ENCODE measurements at regions of chr13 and their contacts with region 1.

Region 1: DNA sequence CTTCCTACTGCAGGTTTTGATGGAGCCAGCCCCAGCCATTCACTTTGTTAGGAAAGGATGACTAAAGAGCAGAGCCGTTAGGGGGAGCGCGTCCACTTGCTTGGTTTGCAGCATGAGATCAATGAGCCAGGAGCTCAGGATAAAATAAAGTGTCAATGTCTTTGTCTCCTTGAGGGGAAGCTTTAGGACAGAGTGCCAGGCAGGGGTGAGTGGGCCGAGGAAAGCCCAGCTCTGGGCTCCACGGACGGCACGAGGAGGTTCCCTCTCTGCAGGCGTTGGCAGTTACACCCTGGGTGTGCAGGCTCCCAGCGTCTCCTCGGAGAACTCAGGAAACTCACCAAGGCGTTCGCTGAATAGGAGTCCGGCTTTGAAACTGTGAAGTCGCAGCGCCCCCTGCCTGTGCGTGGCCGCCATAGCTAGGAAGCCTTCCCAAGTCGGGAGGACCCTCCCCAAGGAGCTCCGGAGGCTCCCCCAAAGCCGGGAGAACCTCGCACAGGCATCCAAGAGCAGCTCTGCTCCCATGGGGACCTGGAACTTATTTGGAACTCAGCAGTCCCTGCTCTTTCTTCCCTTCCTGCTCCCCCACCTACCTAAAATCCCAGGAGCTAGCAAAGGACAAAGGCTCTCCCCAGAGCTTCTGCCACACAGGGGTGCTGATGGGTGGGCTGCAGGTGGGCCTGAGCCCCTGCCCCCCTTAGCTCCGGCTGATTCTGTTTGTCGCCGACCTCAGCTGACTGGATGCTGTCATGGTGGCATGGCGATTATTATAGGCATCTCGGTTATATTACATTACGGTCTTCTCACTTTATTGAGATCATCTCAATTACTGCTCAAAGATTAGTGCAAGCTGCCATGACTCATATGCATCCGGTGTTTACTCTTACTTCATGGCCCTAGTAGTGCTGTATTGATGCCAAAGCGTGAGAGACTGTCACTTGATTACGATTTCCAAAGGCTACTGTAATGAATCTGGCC is 34.4 kb downstream of the GSX1 start:
- DNase-seq: peak; percentile 12
- ATAC-seq: peak; percentile 83
- H3K4me3 ChIP-seq: no peak overlapping the region
- H3K27ac ChIP-seq: no peak overlapping the region
- H3K4me1 ChIP-seq: no peaks in the 10 kb centered on the region
- H3K27me3 ChIP-seq: peaks cover 2 to 6% of the 10 kb centered on the region in 2 experiments
- CTCF ChIP-seq: peak; percentile 87 to 96 (median 94)
- EP300 ChIP-seq: no peak
- POLR2A ChIP-seq: no peak
- RAD21 ChIP-seq: peak; percentile 87

Region 2: DNA sequence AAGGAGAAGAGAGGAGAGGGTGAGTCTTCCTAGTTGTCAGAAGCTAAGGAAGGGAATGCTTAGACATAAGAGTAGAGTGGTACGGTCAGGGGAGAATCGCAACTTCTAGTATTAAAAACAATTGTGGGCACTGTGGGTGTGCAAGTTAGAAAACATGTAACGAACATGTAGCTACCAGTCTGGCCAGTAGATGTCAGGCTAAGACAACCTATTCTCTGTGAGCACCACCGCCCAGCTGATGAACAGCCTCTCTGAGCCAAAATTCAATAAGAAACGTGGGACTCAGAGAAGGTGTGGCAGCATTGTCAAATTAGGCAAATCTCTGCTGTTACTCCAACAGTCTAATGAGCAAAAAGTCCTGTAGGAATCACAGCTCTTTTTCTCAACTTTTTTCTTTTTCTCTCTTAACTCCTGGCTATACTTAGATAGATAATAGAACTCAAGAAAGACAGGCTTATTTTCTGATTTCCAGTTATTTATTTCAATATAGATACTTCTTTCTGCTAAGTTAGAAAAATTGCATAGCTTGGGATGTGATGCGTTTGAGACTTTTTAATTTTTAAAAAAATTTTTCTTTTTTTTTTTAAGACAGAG is 841.3 kb before region 1 on chr13:
- CTCF ChIA-PET with region 1: interaction called, 18 read pairs
- POLR2A ChIA-PET with region 1: no interaction called
- RAD21 ChIA-PET with region 1: interaction called, 12 read pairs
- SMC1A ChIA-PET with region 1: interaction called, 13 read pairs
- in situ Hi-C with region 1: loop called (anchors 5 kb)
- intact Hi-C with region 1: loop called (anchors 5 kb)
- DNase-seq: peak; percentile 49
- ATAC-seq: peak; percentile 91
- H3K4me3 ChIP-seq: no peak overlapping the region
- H3K27ac ChIP-seq: no peak overlapping the region
- H3K4me1 ChIP-seq: no peaks in the 10 kb centered on the region
- H3K27me3 ChIP-seq: no peaks in the 10 kb centered on the region
- CTCF ChIP-seq: peak; percentile 64 to 93 (median 68); a peak in 4 of 6 replicates
- EP300 ChIP-seq: no peak
- POLR2A ChIP-seq: no peak
- RAD21 ChIP-seq: peak; percentile 93

Region 3: GRCh38 chr13:27379694-27380641 is 446.7 kb before region 1 on chr13:
- CTCF ChIA-PET with region 1: interaction called, 189 read pairs
- POLR2A ChIA-PET with region 1: no interaction called
- RAD21 ChIA-PET with region 1: interaction called, 10 read pairs
- SMC1A ChIA-PET with region 1: interaction called, 35 read pairs
- in situ Hi-C with region 1: loop called (anchors 5 kb)
- intact Hi-C with region 1: no loop called
- DNase-seq: no peak
- ATAC-seq: peak; percentile 52
- H3K4me3 ChIP-seq: no peak overlapping the region
- H3K27ac ChIP-seq: no peak overlapping the region
- H3K4me1 ChIP-seq: no peaks in the 10 kb centered on the region
- H3K27me3 ChIP-seq: peaks cover 0 to 1% of the 10 kb centered on the region in 2 experiments; a peak in 1 of 4 replicates
- CTCF ChIP-seq: peak; percentile 55 to 63 (median 58)
- EP300 ChIP-seq: no peak
- POLR2A ChIP-seq: no peak
- RAD21 ChIP-seq: peak; percentile 61

Region 4: DNA sequence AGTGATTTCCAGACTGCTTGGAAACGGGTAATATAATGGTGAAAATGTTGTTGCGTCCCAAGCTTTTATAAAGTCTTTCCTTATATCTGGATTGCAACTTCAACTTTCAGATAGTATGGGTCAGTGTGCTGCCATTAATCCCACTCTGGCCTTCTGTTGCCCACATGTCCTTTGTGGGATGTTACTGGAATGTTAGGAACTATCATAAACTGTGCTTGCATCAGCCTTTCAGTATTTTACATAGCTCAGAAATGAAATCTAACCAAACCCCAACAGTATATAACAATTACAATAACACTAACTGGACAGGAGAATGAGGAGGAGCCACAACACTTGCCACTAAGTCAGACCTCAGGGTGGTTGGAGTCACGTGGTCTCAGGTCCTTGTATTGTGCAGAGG is 285.3 kb before region 1 on chr13:
- CTCF ChIA-PET with region 1: interaction called, 18 read pairs
- POLR2A ChIA-PET with region 1: no interaction called
- RAD21 ChIA-PET with region 1: no interaction called
- SMC1A ChIA-PET with region 1: interaction called, 3 read pairs
- in situ Hi-C with region 1: no loop called
- intact Hi-C with region 1: no loop called
- DNase-seq: no peak
- ATAC-seq: no peak
- H3K4me3 ChIP-seq: no peak overlapping the region
- H3K27ac ChIP-seq: no peak overlapping the region
- H3K4me1 ChIP-seq: no peaks in the 10 kb centered on the region
- H3K27me3 ChIP-seq: no peaks in the 10 kb centered on the region
- CTCF ChIP-seq: no peak
- EP300 ChIP-seq: no peak
- POLR2A ChIP-seq: no peak
- RAD21 ChIP-seq: no peak

Region 5: DNA sequence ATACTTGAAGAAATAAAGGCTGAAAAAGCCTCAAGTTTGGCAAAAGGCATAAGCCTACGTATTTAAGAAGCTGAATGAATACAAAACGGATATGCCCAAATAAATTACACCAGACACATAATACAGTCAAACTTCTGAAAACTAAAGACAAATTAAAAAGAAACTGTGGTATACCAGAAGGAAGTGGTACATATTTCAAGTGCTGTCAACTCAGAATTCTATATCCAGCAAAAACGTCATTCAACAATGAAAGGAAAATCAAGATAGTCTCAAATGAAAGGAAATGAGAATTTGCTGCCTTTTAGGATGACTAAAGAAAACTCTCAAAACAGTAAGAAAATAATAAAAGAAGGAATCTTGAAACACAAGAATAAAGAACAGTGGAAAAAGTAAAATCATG is 135.5 kb before region 1 on chr13:
- CTCF ChIA-PET with region 1: no interaction called
- POLR2A ChIA-PET with region 1: no interaction called
- RAD21 ChIA-PET with region 1: no interaction called
- SMC1A ChIA-PET with region 1: no interaction called
- in situ Hi-C with region 1: no loop called
- intact Hi-C with region 1: no loop called
- DNase-seq: no peak
- ATAC-seq: no peak
- H3K4me3 ChIP-seq: no peak overlapping the region
- H3K27ac ChIP-seq: no peak overlapping the region
- H3K4me1 ChIP-seq: no peaks in the 10 kb centered on the region
- H3K27me3 ChIP-seq: no peaks in the 10 kb centered on the region; a peak in 1 of 4 replicates
- CTCF ChIP-seq: no peak
- EP300 ChIP-seq: no peak
- POLR2A ChIP-seq: no peak
- RAD21 ChIP-seq: no peak

Region 6: GRCh38 chr13:27808851-27809550 is 17.7 kb before region 1 on chr13:
- CTCF ChIA-PET with region 1: interaction called, 12 read pairs
- POLR2A ChIA-PET with region 1: no interaction called
- RAD21 ChIA-PET with region 1: interaction called, 4 read pairs
- SMC1A ChIA-PET with region 1: interaction called, 7 read pairs
- in situ Hi-C with region 1: no loop called
- intact Hi-C with region 1: no loop called
- DNase-seq: no peak
- ATAC-seq: no peak
- H3K4me3 ChIP-seq: no peak overlapping the region
- H3K27ac ChIP-seq: no peak overlapping the region
- H3K4me1 ChIP-seq: no peaks in the 10 kb centered on the region
- H3K27me3 ChIP-seq: peaks cover 0 to 8% of the 10 kb centered on the region in 2 experiments; a peak in 2 of 4 replicates
- CTCF ChIP-seq: no peak
- EP300 ChIP-seq: no peak
- POLR2A ChIP-seq: no peak
- RAD21 ChIP-seq: no peak

Region 7: DNA sequence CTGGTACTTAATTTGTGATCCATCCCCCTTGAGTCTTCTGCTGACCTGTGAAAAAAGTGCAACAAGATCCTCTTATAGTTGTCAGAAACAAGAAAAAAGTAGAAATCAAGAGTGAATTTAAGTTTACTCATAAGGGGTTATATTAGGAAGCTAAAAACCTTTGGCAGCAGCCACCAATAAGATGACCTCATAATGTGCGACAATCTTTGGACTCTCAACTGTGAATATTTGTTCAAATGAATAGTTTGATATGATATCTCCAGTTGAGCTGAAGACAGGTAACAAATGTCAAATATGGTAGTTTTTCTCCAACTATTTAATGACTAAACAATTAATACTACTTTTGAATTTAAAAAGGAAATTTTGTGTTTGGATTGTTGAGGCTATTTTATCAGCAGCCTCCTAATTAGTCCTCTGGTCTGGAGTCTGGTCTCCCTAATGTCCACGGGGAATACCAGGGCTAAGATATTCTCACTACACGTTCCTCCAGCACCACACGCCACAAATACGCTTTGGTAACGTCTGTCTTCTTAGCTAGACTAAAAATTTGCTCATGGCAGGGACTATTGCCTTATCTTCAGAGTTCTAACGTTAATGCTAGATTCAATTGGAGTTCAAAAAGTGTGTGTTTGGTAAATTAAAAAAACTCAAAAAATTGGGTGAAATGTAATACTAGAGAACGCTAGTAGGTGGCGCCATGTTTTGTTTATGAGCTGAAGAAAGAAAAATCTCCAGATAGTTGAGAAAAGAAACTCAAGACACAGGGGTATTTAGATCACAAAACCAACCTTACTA is 42.2 kb after region 1 on chr13:
- CTCF ChIA-PET with region 1: interaction called, 36 read pairs
- POLR2A ChIA-PET with region 1: no interaction called
- RAD21 ChIA-PET with region 1: interaction called, 5 read pairs
- SMC1A ChIA-PET with region 1: interaction called, 11 read pairs
- in situ Hi-C with region 1: no loop called
- intact Hi-C with region 1: no loop called
- DNase-seq: no peak
- ATAC-seq: peak; percentile 19; the same call in 1 of the 3 replicates
- H3K4me3 ChIP-seq: no peak overlapping the region
- H3K27ac ChIP-seq: no peak overlapping the region
- H3K4me1 ChIP-seq: no peaks in the 10 kb centered on the region
- H3K27me3 ChIP-seq: no peaks in the 10 kb centered on the region; a peak in 1 of 4 replicates
- CTCF ChIP-seq: peak; percentile 43 to 55 (median 48); a peak in 5 of 6 replicates
- EP300 ChIP-seq: no peak
- POLR2A ChIP-seq: no peak
- RAD21 ChIP-seq: peak; percentile 50